Activated B cell treated with CpG ODN at 0.5 μM for 24 hours (primary cell): ENCODE measurements at regions of chr2 and their contacts with region 1.

Region 1: DNA sequence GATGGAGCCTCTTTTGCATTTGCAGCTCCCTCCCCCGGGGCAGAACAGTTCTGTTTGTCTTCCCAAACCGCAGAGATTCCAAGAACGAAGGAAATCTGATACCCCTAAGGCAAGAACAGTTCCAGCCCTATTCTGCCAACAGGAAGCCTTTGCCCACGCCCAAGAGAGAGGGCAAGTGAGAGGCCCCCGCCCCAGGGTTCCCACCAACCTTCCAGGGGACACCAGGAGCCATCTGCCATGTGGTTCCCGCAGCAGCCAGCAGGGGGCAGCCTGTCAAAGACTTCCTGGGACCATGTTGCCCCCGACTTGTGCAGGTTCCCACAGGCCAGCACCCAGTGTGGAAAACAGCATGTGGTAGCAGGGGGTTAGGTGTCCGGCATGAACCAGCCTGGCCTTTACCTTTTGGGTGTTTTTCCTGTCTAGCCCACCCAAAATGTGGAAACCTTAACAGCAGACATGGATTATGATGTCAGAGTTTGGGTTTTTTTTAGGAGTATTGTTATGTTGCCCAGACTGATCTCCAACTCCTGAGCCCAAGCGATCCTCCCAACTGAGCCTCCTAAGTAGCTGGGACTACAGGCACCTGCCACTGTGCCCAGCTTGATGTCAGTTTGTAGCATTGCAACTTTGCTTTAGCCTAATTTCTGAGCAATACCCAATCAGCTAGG is 21.7 kb upstream of the EFHD1 start:
- DNase-seq: peak; percentile 56
- ATAC-seq: peak; percentile 57
- H3K4me3 Mint-ChIP-seq: no peak overlapping the region
- H3K27ac Mint-ChIP-seq: no peak overlapping the region
- H3K4me1 Mint-ChIP-seq: no peaks in the 10 kb centered on the region
- H3K27me3 Mint-ChIP-seq: no peaks in the 10 kb centered on the region
- CTCF ChIP-seq: no peak

Region 2: GRCh38 chr2:232550354-232551249 is 61.1 kb before region 1 on chr2 and contains the starts of genes EIF4E2 and TIGD1:
- CTCF ChIA-PET with region 1: no interaction called
- POLR2A ChIA-PET with region 1: no interaction called
- intact Hi-C with region 1: loop called (anchors 1 kb)
- DNase-seq: peak; percentile 86
- ATAC-seq: peak; percentile 85
- H3K4me3 Mint-ChIP-seq: peak within 1 kb of the TSS; percentile 98
- H3K27ac Mint-ChIP-seq: peak within 1 kb of the TSS; percentile 99
- H3K4me1 Mint-ChIP-seq: peaks cover 63% of the 10 kb centered on the region
- H3K27me3 Mint-ChIP-seq: no peaks in the 10 kb centered on the region
- CTCF ChIP-seq: no peak
- total RNA-seq, gene EIF4E2: 63.2 and 67.2 TPM in 2 replicates
- total RNA-seq, gene TIGD1: 8.1 and 8.8 TPM in 2 replicates

Region 3: DNA sequence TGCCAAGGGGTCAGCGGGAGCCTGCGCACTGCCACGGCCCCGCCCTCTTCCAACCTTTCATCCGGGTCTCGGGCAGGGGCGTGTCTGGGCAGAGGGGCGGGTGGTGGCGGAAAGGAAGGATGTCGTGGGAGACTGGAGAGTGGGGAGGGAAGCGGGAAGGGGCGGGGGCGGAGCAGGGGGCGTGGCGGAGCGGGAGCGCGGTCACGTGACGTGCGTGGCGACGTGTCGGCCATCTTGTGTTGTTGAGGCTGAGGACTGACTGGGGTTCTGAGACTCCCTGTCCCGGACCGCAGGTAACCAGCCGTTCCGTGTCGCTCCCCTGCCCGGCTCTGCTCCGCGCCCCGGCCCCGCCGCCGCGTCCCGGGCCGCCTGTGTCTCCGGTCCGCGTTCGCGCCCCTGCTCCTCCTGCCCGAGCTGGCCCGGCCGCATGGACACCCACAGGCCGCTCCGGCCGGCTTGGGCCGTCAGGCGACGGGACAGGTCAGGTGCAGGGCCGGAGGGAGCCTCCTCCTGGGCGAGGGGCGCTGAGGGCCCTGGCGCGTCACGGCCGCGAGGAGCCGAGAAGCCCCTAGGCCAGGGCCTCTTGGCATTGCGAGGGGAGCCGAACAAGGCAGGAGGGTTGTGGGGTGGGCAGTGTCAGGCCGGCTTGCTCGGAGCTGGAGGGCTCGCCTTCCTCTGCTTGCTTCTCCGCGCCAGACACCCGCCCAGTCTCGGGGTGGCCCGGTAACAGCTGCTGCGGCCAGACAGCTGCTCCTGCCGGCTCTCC is 85.6 kb after region 1 on chr2 and contains the start of gene GIGYF2:
- CTCF ChIA-PET with region 1: no interaction called
- POLR2A ChIA-PET with region 1: no interaction called
- intact Hi-C with region 1: loop called (anchors 1 kb)
- DNase-seq: peak; percentile 89
- ATAC-seq: peak; percentile 86
- H3K4me3 Mint-ChIP-seq: peak within 1 kb of the TSS; percentile 89
- H3K27ac Mint-ChIP-seq: peak within 1 kb of the TSS; percentile 79
- H3K4me1 Mint-ChIP-seq: peaks cover 33% of the 10 kb centered on the region
- H3K27me3 Mint-ChIP-seq: no peaks in the 10 kb centered on the region
- CTCF ChIP-seq: no peak
- total RNA-seq, gene GIGYF2: 68.9 and 77.9 TPM in 2 replicates

Region 4: GRCh38 chr2:233029321-233029720 is 417.6 kb after region 1 on chr2:
- CTCF ChIA-PET with region 1: no interaction called
- POLR2A ChIA-PET with region 1: no interaction called
- intact Hi-C with region 1: loop called (anchors 1 kb)
- DNase-seq: no peak
- ATAC-seq: no peak
- H3K4me3 Mint-ChIP-seq: no peak overlapping the region
- H3K27ac Mint-ChIP-seq: no peak overlapping the region
- H3K4me1 Mint-ChIP-seq: no peaks in the 10 kb centered on the region
- H3K27me3 Mint-ChIP-seq: no peaks in the 10 kb centered on the region
- CTCF ChIP-seq: no peak

Region 5: DNA sequence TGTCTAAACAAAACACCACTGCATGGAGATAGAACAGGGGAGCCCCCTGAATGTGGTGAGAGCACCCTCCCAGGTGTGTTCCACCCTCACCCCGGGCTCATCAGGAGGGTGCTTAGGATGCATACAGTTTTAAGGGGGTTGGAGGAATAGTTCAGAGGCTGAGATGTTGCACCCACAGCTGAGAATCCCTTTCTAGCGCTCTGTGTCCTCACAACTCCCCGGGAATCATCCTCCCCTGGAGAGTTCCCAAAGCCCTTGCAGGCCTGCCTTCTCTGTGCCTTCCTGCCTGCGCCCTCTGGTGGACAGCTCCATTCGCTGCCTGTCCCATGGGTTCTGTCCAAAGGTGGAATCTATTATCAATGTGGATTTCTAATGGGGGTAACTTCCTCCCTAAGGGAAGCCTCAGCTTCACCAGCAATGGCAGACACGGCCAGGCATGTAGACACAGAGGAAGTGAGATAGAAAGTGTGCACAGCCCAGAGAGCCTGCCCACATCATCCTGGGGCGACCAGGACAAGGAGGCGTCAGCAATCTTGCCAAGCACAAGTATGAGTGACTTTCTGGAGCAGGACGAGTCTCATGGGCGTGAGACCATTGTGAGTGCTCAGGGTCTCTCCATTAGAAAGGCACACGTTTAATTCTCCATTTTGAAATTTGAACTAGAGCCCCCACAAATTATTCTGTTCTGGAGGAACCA is 1099.8 kb after region 1 on chr2:
- CTCF ChIA-PET with region 1: no interaction called
- POLR2A ChIA-PET with region 1: no interaction called
- intact Hi-C with region 1: loop called (anchors 5 kb)
- DNase-seq: peak; percentile 55
- ATAC-seq: peak; percentile 66
- H3K4me3 Mint-ChIP-seq: no peak overlapping the region
- H3K27ac Mint-ChIP-seq: no peak overlapping the region
- H3K4me1 Mint-ChIP-seq: peaks cover 4% of the 10 kb centered on the region
- H3K27me3 Mint-ChIP-seq: peaks cover 32% of the 10 kb centered on the region
- CTCF ChIP-seq: peak; percentile 75